Gastrocnemius medialis (tissue), 4 donors: ENCODE measurements at regions of chr3 and their contacts with region 1.

Region 1: DNA sequence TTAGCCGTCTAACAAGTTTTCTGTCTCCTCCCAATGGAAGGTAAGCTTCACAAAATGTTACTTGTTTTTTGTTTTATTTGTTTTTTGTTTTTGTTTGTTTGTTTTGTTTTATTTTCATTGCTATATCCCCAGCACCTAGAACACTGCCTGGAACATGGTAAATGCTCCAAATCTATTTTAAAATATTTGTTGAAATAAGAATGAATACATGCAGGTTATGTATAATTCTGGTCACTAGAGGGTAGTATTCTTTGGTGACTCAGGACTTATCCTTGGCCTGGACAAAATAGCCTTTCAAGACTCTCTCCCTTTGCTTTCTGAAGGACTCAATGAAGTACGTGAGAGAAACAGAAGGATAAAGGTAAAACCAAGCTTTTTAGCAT is 47.0 kb upstream of the PPP2R3A start:
- DNase-seq: no peak
- ATAC-seq: peak; percentile 80 to 90
- H3K4me3 ChIP-seq: no peak overlapping the region
- H3K27ac ChIP-seq: peak overlapping the region in 1 of 4 donors; percentile 65
- H3K4me1 ChIP-seq: peaks cover 0 to 15% of the 10 kb centered on the region in 2 donors
- H3K27me3 ChIP-seq: no peaks in the 10 kb centered on the region
- CTCF ChIP-seq: peak; percentile 23 to 61 (median 56)
- POLR2A ChIP-seq: no peak

Region 2: GRCh38 chr3:135965506-135966270 is 47.1 kb after region 1 on chr3 and contains the start of gene PPP2R3A:
- in situ Hi-C with region 1: no loop called
- intact Hi-C with region 1: no loop called
- DNase-seq: peak; percentile 77 to 86
- ATAC-seq: peak; percentile 78 to 82
- H3K4me3 ChIP-seq: peak within 1 kb of the TSS; percentile 65 to 90 (median 85)
- H3K27ac ChIP-seq: peak within 1 kb of the TSS; percentile 82 to 98 (median 96)
- H3K4me1 ChIP-seq: peaks cover 39 to 51% of the 10 kb centered on the region in 2 donors
- H3K27me3 ChIP-seq: no peaks in the 10 kb centered on the region
- CTCF ChIP-seq: no peak
- POLR2A ChIP-seq: peak; percentile 79 to 80
- total RNA-seq, gene PPP2R3A: 16.8 to 30.3 (median 25.6) TPM

Region 3: DNA sequence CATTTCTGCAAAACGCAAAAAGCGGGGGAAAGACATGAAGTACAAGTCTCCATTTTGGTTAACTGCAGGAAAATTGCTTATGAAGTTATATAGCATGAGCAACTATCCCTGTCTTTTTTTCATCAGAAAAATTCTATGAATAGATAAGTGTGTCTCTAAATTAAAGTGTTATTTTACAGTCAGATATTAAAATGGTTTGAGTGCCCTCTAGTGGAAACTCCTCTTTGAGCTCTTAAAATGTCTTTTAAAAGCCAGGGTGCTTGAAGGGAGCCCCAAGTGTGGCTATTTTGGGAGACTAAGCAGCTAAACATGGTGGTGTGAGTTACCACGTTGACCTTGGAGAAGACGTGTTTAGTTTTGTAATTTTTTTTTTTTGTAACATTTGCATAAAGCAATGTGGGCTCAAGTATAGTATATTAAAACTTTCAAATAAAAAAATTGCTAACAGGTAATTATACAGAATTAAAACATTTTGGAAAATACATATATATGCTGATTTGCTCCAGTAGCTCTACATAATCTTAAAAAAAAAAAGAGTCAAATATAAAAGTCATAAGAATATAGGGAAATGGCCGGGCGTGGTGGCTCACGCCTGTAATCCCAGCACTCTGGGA is 124.1 kb after region 1 on chr3:
- in situ Hi-C with region 1: loop called (anchors 5 kb)
- intact Hi-C with region 1: loop called (anchors 1 kb)
- DNase-seq: no peak
- ATAC-seq: peak; percentile 54 to 59
- H3K4me3 ChIP-seq: no peak overlapping the region
- H3K27ac ChIP-seq: peak overlapping the region in 2 of 4 donors; percentile 18 to 67
- H3K4me1 ChIP-seq: peaks cover 11 to 24% of the 10 kb centered on the region in 2 donors
- H3K27me3 ChIP-seq: no peaks in the 10 kb centered on the region
- CTCF ChIP-seq: peak; percentile 54 to 69 (median 65)
- POLR2A ChIP-seq: no peak

Region 4: DNA sequence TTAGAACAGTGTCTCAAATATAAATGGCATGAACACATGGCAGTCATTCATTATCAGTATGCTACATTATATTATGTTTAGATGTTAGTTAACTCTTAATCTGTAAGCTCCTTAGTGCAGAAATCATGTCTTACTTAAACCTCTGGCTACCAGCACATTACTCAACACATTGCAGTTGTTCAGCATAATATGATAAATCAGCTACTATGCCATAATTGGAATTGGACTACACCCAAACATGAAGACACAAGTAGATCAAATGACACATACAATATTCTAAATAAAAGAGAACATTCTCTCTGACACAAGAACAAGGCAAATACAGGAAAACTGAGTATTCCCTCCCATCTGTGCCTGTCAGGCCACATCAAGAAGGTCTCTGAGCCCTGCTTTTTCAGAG is 447.7 kb after region 1 on chr3:
- in situ Hi-C with region 1: no loop called
- intact Hi-C with region 1: no loop called
- DNase-seq: no peak
- ATAC-seq: no peak
- H3K4me3 ChIP-seq: no peak overlapping the region
- H3K27ac ChIP-seq: no peak overlapping the region
- H3K4me1 ChIP-seq: no peaks in the 10 kb centered on the region
- H3K27me3 ChIP-seq: no peaks in the 10 kb centered on the region
- CTCF ChIP-seq: no peak
- POLR2A ChIP-seq: no peak